ENCODE measurements at regions of chr11 and their contacts with region 1.

Region 1: DNA sequence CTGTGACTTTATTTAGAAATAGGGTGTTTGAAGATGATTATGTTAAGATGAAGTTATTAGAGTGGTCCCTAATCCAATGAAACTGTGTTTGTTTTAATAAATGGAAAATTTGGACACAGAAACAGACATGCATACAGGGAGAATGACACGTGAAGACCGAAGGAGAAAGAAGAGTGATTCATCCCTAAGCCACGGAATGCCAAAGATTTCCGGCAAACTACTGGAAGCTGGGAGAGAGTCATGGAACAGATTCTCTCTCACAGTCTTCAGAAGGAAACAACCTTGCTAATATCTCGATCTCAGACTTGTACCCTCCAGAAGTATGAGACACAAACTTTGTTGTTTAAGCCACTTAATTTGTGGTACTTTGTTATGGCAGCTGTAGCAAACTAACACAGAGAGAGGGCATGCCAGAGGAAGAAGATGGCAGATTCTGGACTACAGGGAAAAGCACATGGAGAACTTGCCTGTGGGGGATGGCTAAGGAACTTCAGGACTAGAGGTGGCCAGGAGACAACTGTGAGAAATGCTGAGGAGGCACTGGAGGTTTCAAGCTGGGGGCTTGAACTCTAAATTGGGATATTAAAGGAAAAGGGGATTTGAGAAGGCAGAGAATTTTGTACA is 733.5 kb upstream of the CCDC90B start:
- DNase-seq: peak in 1 of 10 donors; percentile 12

Region 2: DNA sequence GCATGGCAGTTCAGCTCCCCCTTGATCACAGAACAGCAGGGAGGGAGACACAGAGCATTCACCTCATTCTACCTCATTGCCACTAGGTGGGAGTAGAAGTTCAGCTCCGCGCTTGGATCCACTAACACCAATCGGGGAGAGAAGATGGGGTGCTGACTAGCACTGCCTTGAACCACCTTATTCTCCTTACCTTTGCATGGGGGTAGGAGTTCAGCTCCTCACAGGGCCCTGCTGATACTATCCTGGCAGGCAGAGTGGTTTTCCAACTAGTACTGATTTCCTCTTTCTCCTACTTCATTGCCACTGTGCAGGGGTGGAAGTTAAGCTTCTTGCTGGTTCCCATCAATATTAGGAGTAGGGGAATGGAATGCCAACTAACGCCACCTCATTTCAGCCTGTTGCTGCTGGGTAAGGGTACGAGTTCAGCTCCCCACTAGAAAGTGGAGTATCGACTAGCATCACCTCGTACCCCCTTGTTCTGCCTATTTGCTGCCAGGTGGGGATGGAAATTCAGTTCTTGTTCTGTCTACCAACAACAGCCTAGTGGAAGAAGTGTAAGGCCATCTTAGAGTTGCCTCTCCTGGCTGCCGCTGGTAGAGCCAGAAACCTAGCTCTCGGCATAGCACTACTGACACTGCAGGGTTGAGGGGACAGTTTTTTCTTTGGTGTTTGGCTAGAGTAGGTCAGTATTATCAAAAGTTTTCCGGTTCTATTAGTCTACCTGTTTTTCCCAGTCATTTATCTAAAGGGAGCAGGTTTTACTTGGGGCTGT is 182.6 kb before region 1 on chr11:
- intact Hi-C with region 1: loop called (anchors 10 kb)
- DNase-seq: peak in 8 of 10 donors; percentile 29 to 92 (median 55)

Region 3: GRCh38 chr11:84089072-84090057 is 69.7 kb after region 1 on chr11:
- intact Hi-C with region 1: loop called (anchors 10 kb)
- DNase-seq: peak in 4 of 10 donors; percentile 19 to 63 (median 32)

Region 4: GRCh38 chr11:84316866-84317555 is 297.3 kb after region 1 on chr11:
- intact Hi-C with region 1: no loop called
- DNase-seq: peak; percentile 40 to 94 (median 66)